B cell (primary cell): ENCODE measurements at regions of chr15 and their contacts with region 1.

Region 1: GRCh38 chr15:67839929-67840748 is at the start of gene RNU6-1:
- DNase-seq: peak; percentile 97
- ATAC-seq: peak; percentile 84
- H3K4me3 ChIP-seq: peak within 1 kb of the TSS; percentile 68 to 97 (median 83)
- H3K4me3 Mint-ChIP-seq: peak within 1 kb of the TSS; percentile 91
- H3K27ac ChIP-seq: peak within 1 kb of the TSS; percentile 95 to 96
- H3K27ac Mint-ChIP-seq: peak within 1 kb of the TSS; percentile 97
- H3K4me1 ChIP-seq: peaks cover 29 to 36% of the 10 kb centered on the region in 2 donors
- H3K4me1 Mint-ChIP-seq: peaks cover 41% of the 10 kb centered on the region
- H3K27me3 ChIP-seq: peaks cover 0 to 30% (median 12%) of the 10 kb centered on the region in 4 experiments
- H3K27me3 Mint-ChIP-seq: peaks cover 15% of the 10 kb centered on the region
- CTCF ChIP-seq: no peak
- total RNA-seq, gene RNU6-1: not detected in 2 replicates

Region 2: DNA sequence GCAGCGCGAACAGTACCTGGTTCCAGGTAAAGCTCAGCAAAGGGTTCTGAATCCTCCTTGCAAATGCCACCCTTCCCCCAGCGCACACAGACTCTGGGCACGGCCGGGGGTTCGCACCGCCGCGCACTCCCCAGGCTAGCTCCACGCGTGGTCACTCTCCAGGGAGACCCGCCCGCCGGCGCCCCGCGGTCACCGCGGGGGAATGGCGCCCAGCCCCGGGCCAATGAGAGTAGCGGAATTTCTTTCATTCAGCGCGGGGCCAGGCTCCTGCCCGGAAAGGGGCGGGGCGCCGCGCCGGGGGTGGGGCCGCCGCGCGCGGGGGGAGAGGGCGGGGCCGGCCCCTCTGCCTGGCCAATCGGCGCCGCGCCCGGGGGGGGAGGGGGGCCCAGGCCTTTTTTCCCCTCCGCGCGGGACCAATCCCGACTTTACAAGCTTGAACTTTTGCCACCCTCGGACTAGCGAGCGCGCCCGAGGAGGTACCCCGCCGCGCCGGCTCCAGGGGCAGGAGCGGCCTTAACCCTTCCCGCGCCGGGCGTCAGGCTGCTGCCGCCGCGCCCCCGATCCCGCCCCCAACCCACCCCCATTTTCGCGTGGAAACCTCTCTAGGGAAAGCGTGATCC is 1139.2 kb before region 1 on chr15:
- CTCF ChIA-PET with region 1: no interaction called
- POLR2A ChIA-PET with region 1: no interaction called
- intact Hi-C with region 1: loop called (anchors 10 kb)
- DNase-seq: peak; percentile 88
- ATAC-seq: peak; percentile 84
- H3K4me3 ChIP-seq: peak overlapping the region; percentile 63 to 80 (median 77)
- H3K4me3 Mint-ChIP-seq: peak overlapping the region; percentile 94
- H3K27ac ChIP-seq: peak overlapping the region in 1 of 2 donors; percentile 47
- H3K27ac Mint-ChIP-seq: peak overlapping the region; percentile 85
- H3K4me1 ChIP-seq: peaks cover 17 to 27% of the 10 kb centered on the region in 2 donors
- H3K4me1 Mint-ChIP-seq: peaks cover 19% of the 10 kb centered on the region
- H3K27me3 ChIP-seq: peaks cover 0 to 34% (median 7%) of the 10 kb centered on the region in 4 experiments
- H3K27me3 Mint-ChIP-seq: peaks cover 17% of the 10 kb centered on the region
- CTCF ChIP-seq: no peak

Region 3: GRCh38 chr15:67456677-67457529 is 383.2 kb before region 1 on chr15:
- CTCF ChIA-PET with region 1: interaction called, 126 read pairs
- POLR2A ChIA-PET with region 1: no interaction called
- intact Hi-C with region 1: no loop called
- DNase-seq: peak; percentile 83
- ATAC-seq: peak; percentile 99
- H3K4me3 ChIP-seq: no peak overlapping the region
- H3K4me3 Mint-ChIP-seq: no peak overlapping the region
- H3K27ac ChIP-seq: no peak overlapping the region
- H3K27ac Mint-ChIP-seq: no peak overlapping the region
- H3K4me1 ChIP-seq: peaks cover 0 to 3% of the 10 kb centered on the region in 2 donors
- H3K4me1 Mint-ChIP-seq: peaks cover 2% of the 10 kb centered on the region
- H3K27me3 ChIP-seq: peaks cover 0 to 3% (median 1%) of the 10 kb centered on the region in 4 experiments
- H3K27me3 Mint-ChIP-seq: peaks cover 7% of the 10 kb centered on the region
- CTCF ChIP-seq: peak; percentile 97

Region 4: DNA sequence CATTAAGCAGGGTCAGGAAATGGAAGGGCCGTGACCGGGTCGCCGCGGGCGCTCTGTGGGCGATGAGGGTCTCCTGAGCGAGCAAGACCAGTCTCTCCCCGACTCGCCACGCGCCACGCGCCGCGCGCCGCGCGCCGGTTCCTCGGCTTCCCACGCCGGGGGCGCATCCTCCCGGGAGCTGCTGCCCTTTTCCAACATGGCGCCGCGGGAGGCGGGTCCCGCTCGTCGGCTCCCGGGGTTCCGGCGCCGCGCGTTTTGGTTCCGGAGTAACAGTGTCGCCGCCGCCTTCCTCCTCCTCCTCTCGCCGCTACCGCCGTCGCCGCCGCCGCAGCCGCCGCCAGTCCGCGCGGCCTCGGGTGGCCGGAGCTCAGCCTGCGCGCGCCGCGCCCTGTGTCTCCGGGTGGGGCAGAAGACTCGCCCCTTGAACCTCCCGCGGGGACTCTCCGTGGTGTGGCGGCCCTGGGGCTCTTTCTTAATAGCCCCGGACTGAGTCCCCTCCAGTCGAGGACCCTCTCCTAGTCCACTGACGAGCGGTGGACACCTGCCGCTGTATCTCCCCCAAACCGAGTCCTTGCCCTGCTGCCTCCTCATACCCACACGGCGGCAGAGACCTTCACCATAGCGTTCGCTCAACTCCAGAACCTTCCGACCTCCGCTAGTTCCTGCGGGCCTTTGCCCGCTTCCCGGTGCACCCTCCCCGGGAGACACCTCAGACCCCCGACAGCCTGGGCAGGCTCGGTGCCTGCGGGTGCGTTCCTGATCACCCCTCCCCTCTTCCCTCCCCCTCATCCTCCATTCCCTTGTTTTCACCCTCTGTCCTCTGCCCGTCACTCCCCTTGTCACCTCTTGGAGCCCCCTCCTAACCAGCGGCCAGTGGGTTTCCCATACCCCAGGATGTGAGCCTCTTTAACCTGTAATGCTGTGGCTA is 297.5 kb before region 1 on chr15 and contains the start of gene MAP2K5:
- CTCF ChIA-PET with region 1: interaction called, 3 read pairs
- POLR2A ChIA-PET with region 1: interaction called, 5 read pairs
- intact Hi-C with region 1: loop called (anchors 1 kb)
- DNase-seq: peak; percentile 85
- ATAC-seq: peak; percentile 80
- H3K4me3 ChIP-seq: peak within 1 kb of the TSS; percentile 78 to 99 (median 83)
- H3K4me3 Mint-ChIP-seq: peak within 1 kb of the TSS; percentile 91
- H3K27ac ChIP-seq: peak within 1 kb of the TSS; percentile 79 to 83
- H3K27ac Mint-ChIP-seq: peak within 1 kb of the TSS; percentile 93
- H3K4me1 ChIP-seq: peaks cover 25 to 28% of the 10 kb centered on the region in 2 donors
- H3K4me1 Mint-ChIP-seq: peaks cover 51% of the 10 kb centered on the region
- H3K27me3 ChIP-seq: peaks cover 0 to 6% (median 3%) of the 10 kb centered on the region in 4 experiments
- H3K27me3 Mint-ChIP-seq: peaks cover 5% of the 10 kb centered on the region
- CTCF ChIP-seq: no peak
- total RNA-seq, gene MAP2K5: 40.0 and 47.1 TPM in 2 replicates

Region 5: DNA sequence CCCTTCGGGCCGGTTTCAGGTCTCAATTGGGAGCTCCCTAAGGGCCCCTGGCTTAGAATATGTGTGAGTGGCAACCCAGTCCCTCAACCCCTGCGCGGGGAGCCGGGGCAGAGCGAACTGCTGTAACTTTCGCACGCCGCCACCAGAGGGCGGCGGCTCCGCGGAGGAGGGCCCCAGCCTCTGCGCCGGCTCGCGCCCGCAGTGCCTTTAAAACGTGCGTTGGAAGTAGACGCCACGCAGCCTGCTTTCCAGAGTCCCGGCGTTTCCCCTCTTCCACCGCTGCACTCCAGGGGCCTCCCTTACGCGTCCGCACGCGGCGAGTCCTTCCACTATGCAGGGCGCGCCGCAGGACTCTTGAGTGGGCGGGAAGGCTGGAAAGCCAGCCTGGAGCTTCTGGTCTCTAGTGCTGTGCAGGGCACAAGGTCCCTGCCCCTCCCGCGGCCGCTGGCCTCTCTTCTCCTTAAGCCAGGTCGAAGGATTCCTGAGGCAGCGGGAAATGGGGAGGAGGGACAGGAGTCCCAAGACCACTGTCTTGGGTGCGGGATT is 23.4 kb after region 1 on chr15:
- CTCF ChIA-PET with region 1: interaction called, 7 read pairs
- POLR2A ChIA-PET with region 1: no interaction called
- intact Hi-C with region 1: loop called (anchors 1 kb)
- DNase-seq: peak; percentile 83
- ATAC-seq: peak; percentile 92
- H3K4me3 ChIP-seq: peak overlapping the region in 4 of 5 experiments; percentile 25 to 60 (median 52)
- H3K4me3 Mint-ChIP-seq: peak overlapping the region; percentile 80
- H3K27ac ChIP-seq: no peak overlapping the region
- H3K27ac Mint-ChIP-seq: peak overlapping the region; percentile 90
- H3K4me1 ChIP-seq: peaks cover 14 to 15% of the 10 kb centered on the region in 2 donors
- H3K4me1 Mint-ChIP-seq: peaks cover 14% of the 10 kb centered on the region
- H3K27me3 ChIP-seq: peaks cover 0 to 4% (median 2%) of the 10 kb centered on the region in 4 experiments
- H3K27me3 Mint-ChIP-seq: peaks cover 9% of the 10 kb centered on the region
- CTCF ChIP-seq: peak; percentile 91

Region 6: DNA sequence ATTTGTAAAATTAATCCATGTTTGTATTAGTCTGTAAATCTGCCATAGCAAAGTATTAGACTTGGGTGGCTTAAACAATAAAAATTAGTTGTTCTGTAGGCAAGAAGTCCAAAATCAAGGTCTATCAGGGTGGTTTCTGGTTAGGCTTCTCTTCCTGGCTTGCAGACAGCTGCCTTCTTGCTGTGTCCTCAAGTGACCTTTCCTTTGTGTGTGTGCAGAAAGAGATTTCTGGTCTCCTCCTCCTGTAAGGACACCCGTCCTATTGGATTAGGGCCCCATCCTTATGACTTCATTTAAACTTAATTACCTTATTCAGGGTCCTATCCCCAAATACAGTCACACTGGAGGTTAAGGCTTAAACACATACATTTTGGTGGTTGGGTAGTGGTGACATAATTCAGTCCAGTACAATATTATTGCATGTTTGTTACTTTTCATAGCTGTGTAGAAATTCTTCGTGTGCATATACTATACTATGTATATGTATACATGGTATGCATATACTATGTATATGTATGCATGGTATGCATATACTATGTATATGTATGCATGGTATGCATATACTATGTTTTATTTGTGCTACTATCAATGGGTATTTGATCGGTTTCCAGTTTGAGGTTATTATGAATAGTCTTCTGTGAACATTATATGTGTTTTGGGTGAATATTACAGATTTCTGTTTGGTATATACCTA is 57.7 kb after region 1 on chr15:
- CTCF ChIA-PET with region 1: no interaction called
- POLR2A ChIA-PET with region 1: no interaction called
- intact Hi-C with region 1: no loop called
- DNase-seq: no peak
- ATAC-seq: no peak
- H3K4me3 ChIP-seq: no peak overlapping the region
- H3K4me3 Mint-ChIP-seq: no peak overlapping the region
- H3K27ac ChIP-seq: no peak overlapping the region
- H3K27ac Mint-ChIP-seq: no peak overlapping the region
- H3K4me1 ChIP-seq: no peaks in the 10 kb centered on the region
- H3K4me1 Mint-ChIP-seq: no peaks in the 10 kb centered on the region
- H3K27me3 ChIP-seq: peaks cover 0 to 3% (median 0%) of the 10 kb centered on the region in 4 experiments
- H3K27me3 Mint-ChIP-seq: no peaks in the 10 kb centered on the region
- CTCF ChIP-seq: no peak

Region 7: DNA sequence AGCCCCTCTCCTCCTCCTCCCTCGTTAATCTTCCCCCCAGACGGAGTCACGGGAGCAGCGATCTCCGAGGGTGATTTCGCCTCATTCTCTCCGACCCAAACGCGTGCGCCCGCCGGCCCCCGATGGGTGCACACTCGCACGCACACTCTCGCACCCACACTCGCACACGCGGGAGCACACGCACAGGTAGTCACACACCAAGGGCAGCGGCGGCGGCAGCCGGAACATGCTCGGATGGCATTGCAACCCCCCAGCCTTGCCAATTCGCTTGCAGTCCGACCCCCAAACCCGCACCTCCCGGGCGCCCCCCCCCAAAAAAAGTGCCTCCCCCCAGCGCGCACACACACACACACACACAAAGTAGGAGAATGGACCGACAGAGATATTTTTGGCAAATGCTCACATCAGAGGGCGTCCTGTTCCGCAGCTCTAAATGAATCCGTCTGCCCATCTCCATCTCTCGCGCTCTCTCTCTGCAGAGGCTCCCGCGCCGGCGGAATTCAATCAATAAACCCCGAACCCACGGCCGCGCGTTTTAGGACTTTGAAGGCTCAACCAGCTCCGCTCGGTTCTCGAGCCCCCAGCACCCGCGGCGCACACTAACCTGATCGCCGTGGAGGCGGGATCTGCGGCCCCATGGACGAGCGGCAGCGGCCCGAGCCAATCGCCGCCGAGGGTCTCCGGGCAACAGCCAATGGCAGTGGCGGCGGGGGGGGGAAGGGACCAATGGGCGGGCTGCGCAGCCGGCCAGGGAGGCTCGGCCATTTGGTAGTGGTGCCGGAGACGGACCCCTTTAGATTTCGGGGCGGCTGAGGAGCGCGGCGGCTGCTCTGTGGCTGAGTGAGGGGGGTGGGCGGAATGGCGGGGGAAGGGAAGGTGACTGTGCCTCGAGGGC is 980.4 kb after region 1 on chr15 and contains the start of gene ANP32A:
- CTCF ChIA-PET with region 1: no interaction called
- POLR2A ChIA-PET with region 1: no interaction called
- intact Hi-C with region 1: loop called (anchors 10 kb)
- DNase-seq: peak; percentile 98
- ATAC-seq: peak; percentile 71
- H3K4me3 ChIP-seq: peak within 1 kb of the TSS; percentile 71 to 98 (median 94)
- H3K4me3 Mint-ChIP-seq: peak within 1 kb of the TSS; percentile 96
- H3K27ac ChIP-seq: peak within 1 kb of the TSS; percentile 90 to 93
- H3K27ac Mint-ChIP-seq: peak within 1 kb of the TSS; percentile 98
- H3K4me1 ChIP-seq: peaks cover 21 to 22% of the 10 kb centered on the region in 2 donors
- H3K4me1 Mint-ChIP-seq: peaks cover 27% of the 10 kb centered on the region
- H3K27me3 ChIP-seq: no peaks in the 10 kb centered on the region
- H3K27me3 Mint-ChIP-seq: no peaks in the 10 kb centered on the region
- CTCF ChIP-seq: no peak
- total RNA-seq, gene ANP32A: 153 and 163 TPM in 2 replicates